Endothelial cell of umbilical vein (primary cell): ENCODE measurements at regions of chr1 and their contacts with region 1.

Region 1: DNA sequence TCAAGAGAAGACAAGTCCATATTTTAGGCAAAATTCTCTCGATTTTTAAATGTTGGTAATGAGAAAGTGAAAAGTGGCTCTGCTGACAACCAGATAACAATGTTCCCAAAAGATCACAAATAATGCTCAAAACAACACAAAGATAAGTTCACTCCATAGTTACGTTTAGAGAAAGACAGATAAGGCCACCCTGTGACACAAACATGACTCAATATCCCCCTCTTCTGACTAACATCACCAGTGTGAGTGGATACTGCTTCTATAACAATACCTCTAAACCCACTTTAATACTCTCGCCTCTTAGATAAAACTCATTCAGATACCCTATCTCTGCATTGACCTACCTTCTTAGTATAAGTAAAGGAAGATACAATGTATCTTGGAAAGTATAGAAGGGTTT is 51.2 kb upstream of the RGS7 start:
- DNase-seq: peak; percentile 38
- H3K4me3 ChIP-seq: no peak overlapping the region
- H3K27ac ChIP-seq: no peak overlapping the region
- H3K4me1 ChIP-seq: no peaks in the 10 kb centered on the region
- H3K27me3 ChIP-seq: no peaks in the 10 kb centered on the region
- CTCF ChIP-seq: peak in 1 of 2 donors; percentile 5
- POLR2A ChIP-seq: no peak

Region 2: GRCh38 chr1:240967070-240967724 is 441.0 kb before region 1 on chr1:
- CTCF ChIA-PET with region 1: interaction called, 3 read pairs
- POLR2A ChIA-PET with region 1: no interaction called
- dilution Hi-C with region 1: no loop called
- intact Hi-C with region 1: loop called (anchors 5 kb)
- DNase-seq: peak; percentile 4
- H3K4me3 ChIP-seq: no peak overlapping the region
- H3K27ac ChIP-seq: no peak overlapping the region
- H3K4me1 ChIP-seq: no peaks in the 10 kb centered on the region
- H3K27me3 ChIP-seq: no peaks in the 10 kb centered on the region
- CTCF ChIP-seq: peak in 1 of 2 donors; percentile 6
- POLR2A ChIP-seq: no peak

Region 3: DNA sequence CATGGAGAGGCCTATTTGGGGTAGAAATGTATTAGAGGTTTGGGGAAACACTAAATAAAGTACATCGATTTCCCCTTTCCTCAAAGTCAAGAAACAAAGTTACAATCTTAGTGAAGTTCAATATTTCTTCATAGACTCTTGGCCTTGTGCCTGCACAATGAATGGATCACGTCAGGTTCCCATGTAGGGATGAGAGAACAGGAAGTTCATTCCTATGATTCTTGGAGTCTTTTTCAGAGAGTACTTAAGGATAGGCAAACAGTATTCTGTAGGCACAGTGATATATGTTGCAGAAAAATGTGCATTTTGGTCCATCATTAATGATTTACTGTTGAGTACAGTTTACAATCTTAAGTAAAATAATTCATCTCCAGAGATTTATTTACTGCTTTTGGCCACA is 326.7 kb before region 1 on chr1:
- CTCF ChIA-PET with region 1: no interaction called
- POLR2A ChIA-PET with region 1: no interaction called
- dilution Hi-C with region 1: no loop called
- intact Hi-C with region 1: no loop called
- DNase-seq: no peak
- H3K4me3 ChIP-seq: no peak overlapping the region
- H3K27ac ChIP-seq: no peak overlapping the region
- H3K4me1 ChIP-seq: no peaks in the 10 kb centered on the region
- H3K27me3 ChIP-seq: no peaks in the 10 kb centered on the region
- CTCF ChIP-seq: no peak
- POLR2A ChIP-seq: no peak

Region 4: GRCh38 chr1:241396747-241397681 is 11.2 kb before region 1 on chr1:
- CTCF ChIA-PET with region 1: no interaction called
- POLR2A ChIA-PET with region 1: no interaction called
- dilution Hi-C with region 1: no loop called
- intact Hi-C with region 1: no loop called
- DNase-seq: no peak
- H3K4me3 ChIP-seq: no peak overlapping the region
- H3K27ac ChIP-seq: no peak overlapping the region
- H3K4me1 ChIP-seq: peaks cover 3% of the 10 kb centered on the region
- H3K27me3 ChIP-seq: no peaks in the 10 kb centered on the region
- CTCF ChIP-seq: no peak
- POLR2A ChIP-seq: no peak